Activated CD8-positive, alpha-beta T cell treated with anti-CD3 and anti-CD28 coated beads for 36 hours (primary cell): ENCODE measurements at regions of chr2 and their contacts with region 1.

Region 1: DNA sequence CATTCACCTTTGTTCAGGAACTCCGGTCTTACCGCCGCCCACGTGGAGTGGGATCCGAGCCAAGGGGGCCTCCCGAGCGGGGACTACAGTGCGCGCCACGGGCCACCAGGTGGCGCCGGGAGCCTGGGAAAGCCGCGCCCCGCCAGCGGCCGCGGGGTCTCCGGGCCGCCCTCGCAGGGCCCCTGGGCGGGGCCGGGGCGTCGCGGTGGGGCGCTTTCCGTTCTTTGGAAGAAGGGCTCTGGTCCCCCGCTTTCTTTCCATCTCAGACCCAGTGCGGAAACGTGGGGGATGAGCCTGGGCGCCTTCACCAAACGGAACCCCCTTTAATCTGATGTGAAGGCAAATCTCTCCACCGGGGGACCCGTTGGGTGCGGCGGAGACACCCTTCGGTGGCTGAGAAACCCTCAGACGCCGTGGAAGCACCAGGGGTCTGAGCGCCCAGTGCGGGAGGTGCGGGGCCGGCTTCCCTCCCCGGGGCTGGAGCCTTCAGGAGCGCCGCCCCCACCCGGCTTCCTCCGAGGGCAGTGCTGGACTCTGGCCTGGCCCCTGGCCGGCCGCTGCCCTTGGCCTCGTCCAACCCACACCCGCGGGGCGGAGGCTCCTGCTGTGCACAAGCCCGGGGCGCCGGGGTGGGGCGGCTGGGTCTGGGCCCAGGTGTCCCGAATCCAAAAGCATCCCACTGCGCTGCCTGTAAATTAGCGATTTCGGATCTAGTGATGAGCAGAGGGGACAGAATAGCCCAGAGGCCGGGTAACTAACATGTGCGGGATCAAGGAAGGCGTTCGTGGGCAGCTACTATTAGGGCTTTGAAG is 44.6 kb downstream of the GORASP2 start:
- DNase-seq: peak; percentile 90
- ATAC-seq: peak; percentile 96
- H3K4me3 Mint-ChIP-seq: peak overlapping the region; percentile 73
- H3K27ac Mint-ChIP-seq: peak overlapping the region; percentile 58
- H3K4me1 Mint-ChIP-seq: peaks cover 6% of the 10 kb centered on the region
- H3K27me3 Mint-ChIP-seq: no peaks in the 10 kb centered on the region
- CTCF ChIP-seq: peak; percentile 99

Region 2: DNA sequence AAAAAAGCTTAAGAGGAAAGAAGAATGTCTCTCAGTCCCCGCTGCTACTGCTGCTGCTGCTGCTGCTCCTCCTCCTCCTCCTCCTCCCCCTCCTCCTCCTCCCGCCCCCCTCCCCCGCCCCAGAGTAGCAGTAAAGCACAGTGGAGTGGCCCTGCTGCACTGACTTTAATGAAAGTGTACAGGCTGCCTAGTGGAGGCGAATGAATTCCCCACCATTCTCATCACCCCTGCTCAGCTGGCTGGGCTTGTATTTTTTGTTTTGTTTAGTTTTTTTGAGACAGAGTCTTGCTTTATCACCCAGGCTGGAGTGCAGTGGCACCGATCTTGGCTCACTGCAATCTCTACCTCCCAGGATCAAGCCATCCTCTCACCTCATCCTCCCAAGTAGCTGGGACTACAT is 10.3 kb before region 1 on chr2:
- CTCF ChIA-PET with region 1: interaction called, 10 read pairs
- POLR2A ChIA-PET with region 1: interaction called, 4 read pairs
- intact Hi-C with region 1: no loop called
- DNase-seq: no peak
- ATAC-seq: no peak
- H3K4me3 Mint-ChIP-seq: no peak overlapping the region
- H3K27ac Mint-ChIP-seq: no peak overlapping the region
- H3K4me1 Mint-ChIP-seq: peaks cover 6% of the 10 kb centered on the region
- H3K27me3 Mint-ChIP-seq: no peaks in the 10 kb centered on the region
- CTCF ChIP-seq: no peak

Region 3: GRCh38 chr2:171160119-171160955 is 186.6 kb after region 1 on chr2 and contains the start of gene TLK1:
- CTCF ChIA-PET with region 1: interaction called, 14 read pairs
- POLR2A ChIA-PET with region 1: interaction called, 4 read pairs
- intact Hi-C with region 1: loop called (anchors 2 kb)
- DNase-seq: peak; percentile 82
- ATAC-seq: peak; percentile 69
- H3K4me3 Mint-ChIP-seq: peak within 1 kb of the TSS; percentile 91
- H3K27ac Mint-ChIP-seq: peak within 1 kb of the TSS; percentile 96
- H3K4me1 Mint-ChIP-seq: peaks cover 48% of the 10 kb centered on the region
- H3K27me3 Mint-ChIP-seq: no peaks in the 10 kb centered on the region
- CTCF ChIP-seq: no peak
- total RNA-seq, gene TLK1: 53.9 to 56.0 TPM

Region 4: DNA sequence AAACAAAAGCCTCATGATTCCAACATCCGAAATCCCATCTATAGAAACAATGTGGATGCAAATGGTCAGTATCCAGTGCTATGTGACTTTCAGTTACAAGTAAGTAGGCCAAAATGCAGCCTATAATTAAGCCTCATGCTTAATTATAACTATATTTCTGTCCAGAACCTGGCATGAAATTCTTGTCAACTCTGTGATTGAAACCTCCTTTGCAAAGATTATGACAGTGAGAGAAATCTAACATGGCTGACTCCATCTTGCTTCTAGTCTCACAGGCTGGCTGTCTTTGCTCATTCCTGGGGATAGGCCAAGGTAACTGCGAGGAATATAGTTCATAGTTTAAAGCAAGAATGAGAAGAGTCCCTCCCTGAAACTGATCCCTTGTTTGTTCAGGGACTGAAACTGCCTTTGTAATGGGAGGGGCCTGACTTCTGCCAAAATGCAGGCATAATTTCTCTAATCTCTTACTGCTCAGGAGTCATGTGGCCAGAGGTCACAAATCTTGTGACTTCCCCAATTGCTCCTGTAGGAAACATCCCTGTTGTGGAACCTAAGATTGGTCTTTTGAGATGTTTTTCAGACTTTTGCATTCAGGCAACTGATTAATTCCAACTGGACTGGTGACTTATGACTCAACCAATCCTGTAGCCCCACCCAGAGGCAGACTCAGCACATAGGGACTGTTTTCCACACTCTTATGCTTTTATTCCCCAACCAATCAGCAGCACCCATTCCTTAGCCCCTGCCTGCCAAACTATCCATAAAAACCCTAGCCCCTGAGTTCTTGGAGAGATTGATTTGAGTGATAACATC is 271.5 kb after region 1 on chr2:
- CTCF ChIA-PET with region 1: interaction called, 3 read pairs
- POLR2A ChIA-PET with region 1: no interaction called
- intact Hi-C with region 1: loop called (anchors 10 kb)
- DNase-seq: peak; percentile 10
- ATAC-seq: no peak
- H3K4me3 Mint-ChIP-seq: no peak overlapping the region
- H3K27ac Mint-ChIP-seq: no peak overlapping the region
- H3K4me1 Mint-ChIP-seq: peaks cover 40% of the 10 kb centered on the region
- H3K27me3 Mint-ChIP-seq: no peaks in the 10 kb centered on the region
- CTCF ChIP-seq: no peak